Gastrocnemius medialis (tissue), 4 donors: ENCODE measurements at regions of chr19 and their contacts with region 1.

Region 1: DNA sequence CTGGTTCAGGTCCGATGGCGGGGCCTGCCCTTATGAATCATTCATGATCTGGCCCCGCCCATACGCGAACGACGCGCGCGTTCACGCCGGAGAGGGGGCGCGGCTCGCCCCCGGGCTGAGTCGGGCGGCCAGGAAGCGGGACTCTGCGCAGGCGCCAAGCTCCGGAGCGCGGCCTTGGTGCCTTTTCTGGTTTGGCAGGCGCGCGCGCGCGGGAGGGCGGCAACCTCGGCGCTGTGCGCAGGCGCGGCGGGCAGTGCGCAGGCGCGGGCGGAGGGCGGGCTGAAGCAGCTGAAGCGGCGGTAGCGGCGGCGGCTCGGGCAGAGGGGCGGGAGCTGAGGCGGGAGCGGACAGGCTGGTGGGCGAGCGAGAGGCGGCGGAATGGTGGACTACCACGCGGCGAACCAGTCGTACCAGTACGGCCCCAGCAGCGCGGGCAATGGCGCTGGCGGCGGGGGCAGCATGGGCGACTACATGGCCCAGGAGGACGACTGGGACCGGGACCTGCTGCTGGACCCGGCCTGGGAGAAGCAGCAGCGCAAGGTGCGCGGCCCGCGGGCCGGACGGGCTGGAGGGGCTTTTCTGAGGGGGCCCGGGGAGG is at the start of gene ACTN4:
- DNase-seq: peak; percentile 97 to 98
- ATAC-seq: peak; percentile 68 to 81
- H3K4me3 ChIP-seq: peak within 1 kb of the TSS; percentile 90 to 100 (median 100)
- H3K27ac ChIP-seq: peak within 1 kb of the TSS; percentile 98 to 100 (median 99)
- H3K4me1 ChIP-seq: peaks cover 36 to 41% of the 10 kb centered on the region in 2 donors
- H3K27me3 ChIP-seq: no peaks in the 10 kb centered on the region
- CTCF ChIP-seq: no peak
- POLR2A ChIP-seq: peak; percentile 100
- total RNA-seq, gene ACTN4: 32.0 to 85.3 (median 63.9) TPM

Region 2: GRCh38 chr19:38683393-38684080 is 36.1 kb after region 1 on chr19:
- in situ Hi-C with region 1: no loop called
- intact Hi-C with region 1: loop called (anchors 1 kb)
- DNase-seq: peak; percentile 48 to 84
- ATAC-seq: peak; percentile 38 to 45
- H3K4me3 ChIP-seq: peak overlapping the region in 2 of 4 donors; percentile 24 to 27
- H3K27ac ChIP-seq: peak overlapping the region; percentile 89 to 98 (median 96)
- H3K4me1 ChIP-seq: peaks cover 89 to 94% of the 10 kb centered on the region in 2 donors
- H3K27me3 ChIP-seq: no peaks in the 10 kb centered on the region
- CTCF ChIP-seq: no peak
- POLR2A ChIP-seq: no peak

Region 3: DNA sequence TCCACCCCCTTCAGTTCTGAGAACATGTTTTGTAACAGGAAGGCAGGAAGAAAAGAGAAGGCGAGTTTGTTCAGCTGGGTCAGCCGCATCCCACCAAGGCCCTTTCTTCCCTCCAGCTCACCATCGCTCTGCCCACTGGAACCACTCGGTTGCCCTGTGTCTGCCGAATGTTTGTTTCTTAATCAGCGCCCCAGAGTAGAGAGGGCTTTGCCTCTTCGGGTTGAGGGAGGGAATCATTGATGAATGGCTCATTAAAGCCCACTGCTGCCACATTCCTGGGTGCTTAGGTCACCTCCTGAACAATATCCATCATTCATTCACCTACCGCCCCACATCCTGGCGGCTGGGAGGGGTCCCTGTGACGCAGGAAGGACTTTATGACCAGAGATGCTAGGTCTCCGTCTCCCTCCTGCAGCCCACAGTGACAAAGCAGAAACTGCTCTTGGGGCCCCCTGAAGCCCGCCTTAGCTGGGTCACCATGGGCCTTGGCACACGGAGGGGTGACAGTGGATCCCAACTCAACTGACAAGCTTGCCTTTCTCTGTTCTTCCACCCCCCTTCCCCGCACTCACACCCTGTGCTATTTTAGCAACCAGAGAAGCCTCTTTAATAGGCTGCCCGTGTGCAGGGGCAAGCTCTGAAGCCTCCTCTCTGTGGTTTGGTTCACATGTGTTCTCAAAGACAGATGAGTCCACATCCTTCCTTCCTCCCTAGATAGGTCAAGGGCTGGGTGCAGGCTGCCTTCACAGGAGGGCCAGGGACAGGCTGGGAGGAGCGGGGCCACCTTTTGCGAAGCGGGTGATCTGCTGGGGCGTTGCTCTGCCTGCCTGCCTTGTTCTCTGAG is 46.1 kb after region 1 on chr19:
- in situ Hi-C with region 1: loop called in 1 of 4 experiments (anchors 10 kb)
- intact Hi-C with region 1: no loop called
- DNase-seq: no peak
- ATAC-seq: no peak
- H3K4me3 ChIP-seq: no peak overlapping the region
- H3K27ac ChIP-seq: peak overlapping the region; percentile 89 to 98 (median 96)
- H3K4me1 ChIP-seq: peaks cover 87 to 92% of the 10 kb centered on the region in 2 donors
- H3K27me3 ChIP-seq: no peaks in the 10 kb centered on the region
- CTCF ChIP-seq: no peak
- POLR2A ChIP-seq: no peak

Region 4: DNA sequence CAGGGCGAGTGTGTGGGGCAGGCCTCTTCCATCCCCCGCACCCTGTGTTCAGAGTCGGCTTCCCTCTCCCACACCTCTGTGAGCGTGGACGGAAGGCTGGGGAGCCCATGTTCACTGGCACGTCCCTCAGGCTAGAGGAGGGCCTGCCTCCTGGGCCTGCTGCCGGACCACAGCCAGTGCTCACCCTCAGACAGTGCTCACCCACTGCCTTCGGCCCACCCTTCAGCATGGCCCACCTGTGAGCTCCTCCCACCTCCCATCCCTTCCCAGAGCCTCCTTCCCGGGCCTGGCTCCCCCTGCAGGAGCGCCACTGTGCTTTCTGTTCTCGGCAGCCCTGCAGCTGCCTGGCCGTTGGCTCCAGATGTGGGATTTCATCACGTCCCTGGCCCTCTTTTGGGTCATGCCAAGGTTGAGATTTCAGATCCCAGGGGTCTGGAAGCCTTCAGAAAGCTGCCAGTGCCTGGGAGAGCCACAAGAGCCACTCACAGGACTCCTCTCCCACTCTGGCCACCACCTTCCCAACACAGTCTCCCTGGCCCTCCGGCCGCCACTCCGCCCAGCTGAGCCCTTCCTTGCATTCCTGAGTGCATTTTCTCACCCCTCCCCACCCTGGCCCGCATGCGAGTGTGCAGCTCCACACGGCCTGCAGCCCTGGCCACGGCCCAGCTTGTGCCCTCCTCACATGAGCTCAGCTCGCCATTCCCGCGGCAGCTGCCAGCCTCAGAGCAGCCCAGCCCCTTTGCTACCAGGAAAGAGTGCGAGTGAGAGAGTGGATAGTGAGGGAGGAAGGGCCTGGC is 71.5 kb after region 1 on chr19:
- in situ Hi-C with region 1: no loop called
- intact Hi-C with region 1: loop called (anchors 10 kb)
- DNase-seq: peak in 1 of 2 donors; percentile 53
- ATAC-seq: peak in 1 of 2 donors; percentile 31
- H3K4me3 ChIP-seq: no peak overlapping the region
- H3K27ac ChIP-seq: peak overlapping the region; percentile 51 to 78 (median 60)
- H3K4me1 ChIP-seq: peaks cover 30 to 31% of the 10 kb centered on the region in 2 donors
- H3K27me3 ChIP-seq: no peaks in the 10 kb centered on the region
- CTCF ChIP-seq: peak in 4 of 5 experiments; percentile 16 to 42 (median 26)
- POLR2A ChIP-seq: no peak

Region 5: GRCh38 chr19:38729653-38730469 is 82.4 kb after region 1 on chr19:
- in situ Hi-C with region 1: no loop called
- intact Hi-C with region 1: loop called (anchors 5 kb)
- DNase-seq: peak in 1 of 2 donors; percentile 58
- ATAC-seq: peak in 1 of 2 donors; percentile 45
- H3K4me3 ChIP-seq: no peak overlapping the region
- H3K27ac ChIP-seq: peak overlapping the region; percentile 25 to 54 (median 40)
- H3K4me1 ChIP-seq: peaks cover 7 to 8% of the 10 kb centered on the region in 2 donors
- H3K27me3 ChIP-seq: no peaks in the 10 kb centered on the region
- CTCF ChIP-seq: peak; percentile 71 to 89 (median 76)
- POLR2A ChIP-seq: no peak